ENCODE measurements at regions of chr6 and their contacts with region 1.

Region 1: DNA sequence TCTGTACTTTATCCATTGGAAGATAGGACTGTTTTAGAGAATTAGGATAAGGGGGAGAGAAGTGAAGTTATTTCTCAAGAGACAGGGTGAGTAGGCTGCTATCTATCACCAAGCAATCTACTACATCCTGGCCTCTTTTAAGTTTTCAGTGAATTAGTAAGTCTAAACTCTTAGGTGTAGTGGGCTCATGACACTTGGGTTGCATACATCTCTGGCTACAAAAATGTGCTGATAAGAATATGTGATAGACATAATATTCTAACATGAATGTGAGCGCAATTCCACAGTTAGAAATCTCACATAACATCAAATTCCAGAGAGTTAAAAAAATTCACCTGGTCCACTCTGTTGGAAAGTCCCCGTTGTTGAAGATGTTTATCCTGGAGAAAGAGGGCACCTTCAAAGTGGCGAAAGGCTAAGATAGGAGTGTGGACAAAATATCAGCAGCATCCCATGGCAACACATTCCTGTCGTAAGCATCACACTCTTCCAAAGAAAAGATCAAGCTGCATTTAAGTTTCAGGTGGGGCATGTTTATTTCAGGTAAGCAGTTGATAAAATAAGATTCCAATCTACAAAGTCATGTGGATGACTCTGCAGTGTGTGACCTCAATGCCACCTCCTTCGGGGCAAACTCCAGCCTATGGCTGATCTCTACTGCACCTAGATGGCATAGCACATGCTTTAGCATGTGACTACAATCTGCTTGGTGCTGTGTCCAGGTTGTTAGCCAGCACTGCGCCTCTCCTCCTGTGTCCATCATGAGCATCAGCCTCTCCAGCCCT is 111.7 kb upstream of the NEDD9 start:
- DNase-seq: no peak
- H3K4me3 Mint-ChIP-seq: no peak overlapping the region
- H3K27ac Mint-ChIP-seq: peak overlapping the region; percentile 61
- H3K4me1 Mint-ChIP-seq: peaks cover 68% of the 10 kb centered on the region
- H3K27me3 Mint-ChIP-seq: no peaks in the 10 kb centered on the region

Region 2: GRCh38 chr6:11064836-11065235 is 279.3 kb before region 1 on chr6:
- intact Hi-C with region 1: no loop called
- DNase-seq: no peak
- H3K4me3 Mint-ChIP-seq: no peak overlapping the region
- H3K27ac Mint-ChIP-seq: no peak overlapping the region
- H3K4me1 Mint-ChIP-seq: no peaks in the 10 kb centered on the region
- H3K27me3 Mint-ChIP-seq: peaks cover 10% of the 10 kb centered on the region

Region 3: GRCh38 chr6:11202513-11203305 is 141.4 kb before region 1 on chr6:
- intact Hi-C with region 1: no loop called
- DNase-seq: no peak
- H3K4me3 Mint-ChIP-seq: peak overlapping the region; percentile 23
- H3K27ac Mint-ChIP-seq: peak overlapping the region; percentile 84
- H3K4me1 Mint-ChIP-seq: peaks cover 56% of the 10 kb centered on the region
- H3K27me3 Mint-ChIP-seq: no peaks in the 10 kb centered on the region

Region 4: DNA sequence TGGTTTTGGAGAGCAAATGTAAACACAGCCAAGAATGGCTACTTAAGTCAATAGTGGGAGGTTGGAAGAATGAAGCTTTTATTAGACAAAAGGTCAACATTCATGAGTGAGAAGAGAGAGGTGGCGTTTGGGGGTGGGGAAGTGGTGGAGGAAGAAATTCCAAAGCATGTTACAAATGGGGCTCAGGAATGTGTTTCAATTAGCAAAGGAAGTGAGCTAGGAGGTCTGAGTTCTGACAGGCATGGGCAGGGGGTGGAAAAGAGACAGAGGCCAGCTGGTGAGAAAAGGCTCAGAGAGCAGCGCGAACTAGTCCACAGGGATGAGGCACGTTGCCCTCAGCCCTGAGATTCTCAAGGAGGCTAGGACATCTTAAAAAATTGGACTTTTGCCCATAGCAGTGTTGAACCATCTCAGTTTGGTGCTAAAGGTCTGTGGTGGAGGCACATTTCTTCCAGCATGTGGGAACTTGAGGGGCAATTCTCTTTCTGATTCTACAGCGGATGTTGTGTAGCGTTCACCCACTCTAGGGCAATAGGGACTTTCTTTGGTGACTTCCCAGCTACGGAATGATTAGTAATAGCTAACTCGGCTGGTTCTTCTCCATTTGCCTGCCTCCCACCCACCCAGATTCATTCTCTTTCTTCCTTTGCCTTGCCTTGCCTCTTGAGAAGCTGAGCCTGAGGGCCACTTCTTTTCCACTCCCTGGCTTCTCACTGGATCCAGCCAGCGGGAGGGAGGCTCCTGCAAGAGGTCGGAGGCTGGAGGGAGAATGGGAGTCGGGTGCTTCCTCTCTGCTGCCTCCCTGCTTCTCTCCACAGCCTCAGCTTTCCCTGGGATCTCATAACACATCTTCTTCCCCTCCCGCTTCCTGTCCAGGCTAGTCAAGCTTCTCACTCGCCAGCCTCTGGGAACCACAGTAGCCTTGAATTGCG is 66.6 kb before region 1 on chr6:
- intact Hi-C with region 1: loop called (anchors 2 kb)
- DNase-seq: no peak
- H3K4me3 Mint-ChIP-seq: no peak overlapping the region
- H3K27ac Mint-ChIP-seq: peak overlapping the region; percentile 95
- H3K4me1 Mint-ChIP-seq: peaks cover 38% of the 10 kb centered on the region
- H3K27me3 Mint-ChIP-seq: no peaks in the 10 kb centered on the region

Region 5: DNA sequence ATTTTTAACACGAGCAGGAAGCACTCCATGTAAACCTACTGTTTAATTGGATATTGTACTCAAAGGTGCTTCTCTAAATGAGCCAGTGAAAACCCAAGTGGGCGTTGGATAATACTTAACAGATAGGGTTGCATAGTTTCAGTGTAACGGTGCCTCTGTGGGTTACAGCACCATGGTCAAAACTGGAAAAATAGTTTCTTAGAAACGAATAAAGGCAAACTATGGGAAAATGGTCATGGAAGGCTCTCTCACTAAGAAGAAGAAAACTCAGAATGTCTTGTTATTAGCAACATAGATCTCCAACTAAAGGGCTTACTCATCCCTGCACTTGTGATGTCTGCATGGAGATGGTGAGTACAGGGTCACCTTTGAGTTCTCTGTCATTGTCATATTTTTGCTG is 52.6 kb before region 1 on chr6:
- intact Hi-C with region 1: loop called (anchors 5 kb)
- DNase-seq: no peak
- H3K4me3 Mint-ChIP-seq: no peak overlapping the region
- H3K27ac Mint-ChIP-seq: peak overlapping the region; percentile 56
- H3K4me1 Mint-ChIP-seq: peaks cover 22% of the 10 kb centered on the region
- H3K27me3 Mint-ChIP-seq: no peaks in the 10 kb centered on the region

Region 6: GRCh38 chr6:11330413-11330760 is 13.8 kb before region 1 on chr6:
- intact Hi-C with region 1: loop called (anchors 1 kb)
- DNase-seq: no peak
- H3K4me3 Mint-ChIP-seq: peak overlapping the region; percentile 13
- H3K27ac Mint-ChIP-seq: peak overlapping the region; percentile 85
- H3K4me1 Mint-ChIP-seq: peaks cover 66% of the 10 kb centered on the region
- H3K27me3 Mint-ChIP-seq: no peaks in the 10 kb centered on the region

Region 7: GRCh38 chr6:11381801-11382513 is 37.8 kb after region 1 on chr6:
- intact Hi-C with region 1: loop called (anchors 5 kb)
- DNase-seq: peak; percentile 71
- H3K4me3 Mint-ChIP-seq: peak overlapping the region; percentile 85
- H3K27ac Mint-ChIP-seq: peak overlapping the region; percentile 92
- H3K4me1 Mint-ChIP-seq: peaks cover 59% of the 10 kb centered on the region
- H3K27me3 Mint-ChIP-seq: no peaks in the 10 kb centered on the region